Cardiac septum (tissue), 1 donor: ENCODE measurements at regions of chr2 and their contacts with region 1.

Region 1: DNA sequence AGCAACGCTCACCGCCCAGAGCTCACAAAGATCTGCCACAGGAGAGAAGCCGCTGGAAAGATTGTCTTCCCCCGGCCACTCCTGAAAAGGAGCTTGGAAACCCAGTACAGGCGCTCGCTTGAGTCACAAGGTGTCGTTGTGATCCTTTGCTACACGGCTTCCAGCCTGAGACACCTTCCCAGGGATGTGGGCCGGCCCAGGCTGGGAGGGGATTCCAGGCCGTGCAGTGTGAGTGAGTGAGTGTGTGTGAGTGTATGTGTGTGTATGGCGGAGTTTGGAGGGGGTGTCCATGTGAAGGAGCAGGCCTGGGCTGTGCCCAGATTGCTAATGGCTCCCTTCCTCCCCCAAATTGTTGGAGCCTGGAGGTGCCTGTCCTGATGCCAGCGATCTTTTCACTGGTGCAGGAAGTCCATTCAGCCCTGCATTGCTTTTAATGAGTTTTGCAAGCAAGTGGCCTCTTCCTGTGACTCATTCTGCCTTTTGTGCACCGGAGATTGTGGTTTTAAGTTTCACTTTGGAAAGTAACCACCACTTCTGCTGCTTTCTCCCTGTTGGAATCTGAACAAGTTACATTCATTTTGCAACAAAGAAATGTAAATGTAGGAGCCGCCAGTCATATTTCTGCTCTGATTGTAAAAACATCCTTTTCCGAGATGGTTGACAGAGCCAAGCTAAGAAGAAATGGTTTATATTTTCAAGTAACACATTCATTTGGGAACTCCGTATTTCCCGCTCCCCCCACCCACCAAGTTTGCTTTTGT is 83.7 kb downstream of the LPIN1 start:
- DNase-seq: no peak

Region 2: GRCh38 chr2:12931186-12931844 is 1101.2 kb after region 1 on chr2:
- intact Hi-C with region 1: loop called (anchors 5 kb)
- DNase-seq: no peak